Dendritic cell treated with granulocyte-macrophage colony-stimulating factor and Interleukin-4, amounts not matched to agents 40 ng/mL and 50 ng/mL, for 4 days (primary cell): ENCODE measurements at regions of chr19 and their contacts with region 1.

Region 1: GRCh38 chr19:11422163-11423021 is 3.3 kb upstream of the RGL3 start:
- H3K4me3 Mint-ChIP-seq: peak overlapping the region; percentile 80
- H3K27ac Mint-ChIP-seq: peak overlapping the region; percentile 66
- H3K4me1 Mint-ChIP-seq: peaks cover 54% of the 10 kb centered on the region
- H3K27me3 Mint-ChIP-seq: peaks cover 68% of the 10 kb centered on the region

Region 2: GRCh38 chr19:11380653-11381534 is 41.5 kb before region 1 on chr19:
- intact Hi-C with region 1: loop called (anchors 2 kb)
- H3K4me3 Mint-ChIP-seq: peak overlapping the region; percentile 83
- H3K27ac Mint-ChIP-seq: peak overlapping the region; percentile 82
- H3K4me1 Mint-ChIP-seq: peaks cover 66% of the 10 kb centered on the region
- H3K27me3 Mint-ChIP-seq: peaks cover 28% of the 10 kb centered on the region

Region 3: DNA sequence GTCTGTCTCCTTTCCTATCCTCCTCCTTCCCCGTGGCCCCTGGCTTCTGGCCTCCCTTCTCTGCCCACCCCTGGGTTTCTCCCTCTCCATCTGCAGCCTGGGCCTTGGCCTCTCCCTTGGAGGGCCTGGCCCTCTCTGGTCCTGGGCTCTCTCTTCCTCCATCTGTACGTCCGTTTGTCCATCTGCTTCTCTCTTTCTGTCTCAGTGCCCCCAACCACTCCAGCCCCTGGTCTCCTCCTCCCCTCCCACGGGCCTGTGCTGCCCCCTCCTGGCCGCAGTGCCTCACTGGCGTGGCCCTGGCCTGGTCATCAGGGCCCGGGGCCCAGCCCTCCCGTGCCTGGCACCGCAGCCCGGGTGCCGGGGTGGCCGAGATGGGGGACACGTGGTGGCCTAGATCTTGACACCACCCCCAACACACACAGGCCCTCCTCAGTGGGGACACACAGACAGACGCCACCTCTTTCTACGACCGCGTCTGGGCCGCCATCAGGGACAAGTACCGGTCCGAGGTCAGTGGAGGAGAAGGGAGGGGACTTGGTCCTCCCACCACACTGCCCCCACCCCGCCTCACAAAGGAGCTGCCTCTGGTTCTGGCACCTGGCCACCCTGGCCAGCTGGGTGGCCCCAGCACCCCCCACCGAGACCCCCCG is 24.4 kb after region 1 on chr19:
- intact Hi-C with region 1: no loop called
- H3K4me3 Mint-ChIP-seq: no peak overlapping the region
- H3K27ac Mint-ChIP-seq: no peak overlapping the region
- H3K4me1 Mint-ChIP-seq: peaks cover 3% of the 10 kb centered on the region
- H3K27me3 Mint-ChIP-seq: no peaks in the 10 kb centered on the region